Colonic mucosa (tissue), 4 donors: ENCODE measurements at regions of chr6 and their contacts with region 1.

Region 1: DNA sequence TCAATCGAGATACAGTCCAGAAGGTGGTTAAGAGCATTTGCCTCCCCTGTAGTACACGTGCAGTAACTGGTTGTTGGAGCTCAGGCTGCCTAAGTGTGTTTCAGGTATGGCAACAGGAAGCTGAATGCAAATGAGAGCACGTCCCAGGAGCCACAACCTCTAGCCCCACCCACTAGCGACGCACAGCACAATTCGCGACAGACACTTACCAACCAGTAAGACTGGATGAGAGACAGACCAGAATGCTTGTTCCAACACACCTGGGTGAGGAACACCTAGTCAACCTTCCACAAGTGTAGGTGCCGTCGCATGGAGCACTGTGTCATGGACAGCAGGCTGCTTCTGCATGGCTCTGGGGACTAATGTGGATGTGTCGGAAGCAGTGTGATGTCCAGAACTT is 7.2 kb upstream of the SERPINB1 start:
- DNase-seq: peak; percentile 63
- H3K4me3 ChIP-seq: no peak overlapping the region
- H3K27ac ChIP-seq: no peak overlapping the region
- H3K4me1 ChIP-seq: no peaks in the 10 kb centered on the region
- H3K27me3 ChIP-seq: no peaks in the 10 kb centered on the region
- CTCF ChIP-seq: no peak

Region 2: DNA sequence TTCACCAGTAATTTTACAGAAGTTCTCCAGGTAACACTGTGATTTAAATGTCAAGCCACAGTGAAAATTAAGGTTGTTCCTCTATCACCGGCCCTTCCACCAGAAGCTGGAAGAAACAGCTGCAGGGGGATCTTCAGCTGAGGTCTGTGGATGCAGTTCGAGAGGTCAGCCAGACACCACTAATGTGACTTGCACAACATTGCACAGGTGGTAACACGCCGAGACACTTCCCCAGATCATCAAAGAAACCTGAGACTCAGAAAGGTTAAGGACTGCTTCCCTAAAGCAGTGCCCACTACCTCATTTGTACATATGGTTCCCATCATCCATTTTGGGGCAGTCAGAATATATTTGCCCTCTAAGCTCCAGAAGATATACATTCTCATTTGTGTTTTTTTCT is 62.3 kb after region 1 on chr6:
- intact Hi-C with region 1: loop called (anchors 5 kb)
- DNase-seq: no peak
- H3K4me3 ChIP-seq: no peak overlapping the region
- H3K27ac ChIP-seq: no peak overlapping the region
- H3K4me1 ChIP-seq: no peaks in the 10 kb centered on the region
- H3K27me3 ChIP-seq: no peaks in the 10 kb centered on the region
- CTCF ChIP-seq: no peak

Region 3: GRCh38 chr6:2999618-3000557 is 151.0 kb after region 1 on chr6 and contains the start of gene NQO2:
- intact Hi-C with region 1: no loop called
- DNase-seq: peak; percentile 98
- H3K4me3 ChIP-seq: peak within 1 kb of the TSS; percentile 86
- H3K27ac ChIP-seq: peak within 1 kb of the TSS; percentile 70
- H3K4me1 ChIP-seq: peaks cover 5% of the 10 kb centered on the region
- H3K27me3 ChIP-seq: no peaks in the 10 kb centered on the region
- CTCF ChIP-seq: no peak
- total RNA-seq, gene NQO2: 14.1 to 19.0 TPM

Region 4: GRCh38 chr6:3057063-3057770 is 208.4 kb after region 1 on chr6:
- intact Hi-C with region 1: loop called (anchors 5 kb)
- DNase-seq: no peak
- H3K4me3 ChIP-seq: no peak overlapping the region
- H3K27ac ChIP-seq: no peak overlapping the region
- H3K4me1 ChIP-seq: no peaks in the 10 kb centered on the region
- H3K27me3 ChIP-seq: no peaks in the 10 kb centered on the region
- CTCF ChIP-seq: no peak